SK-N-SH (cell line): ENCODE measurements at regions of chr20 and their contacts with region 1.

Region 1: GRCh38 chr20:54649511-54649962 is 174.1 kb downstream of the DOK5 start:
- DNase-seq: peak; percentile 66
- H3K4me3 ChIP-seq: no peak overlapping the region; a peak in 1 of 4 replicates
- H3K27ac ChIP-seq: no peak overlapping the region; a peak in 1 of 4 replicates
- H3K4me1 ChIP-seq: peaks cover 0 to 3% of the 10 kb centered on the region in 2 experiments; a peak in 1 of 4 replicates
- H3K27me3 ChIP-seq: no peaks in the 10 kb centered on the region
- CTCF ChIP-seq: peak; percentile 85
- EP300 ChIP-seq: no peak
- RAD21 ChIP-seq: peak; percentile 88

Region 2: DNA sequence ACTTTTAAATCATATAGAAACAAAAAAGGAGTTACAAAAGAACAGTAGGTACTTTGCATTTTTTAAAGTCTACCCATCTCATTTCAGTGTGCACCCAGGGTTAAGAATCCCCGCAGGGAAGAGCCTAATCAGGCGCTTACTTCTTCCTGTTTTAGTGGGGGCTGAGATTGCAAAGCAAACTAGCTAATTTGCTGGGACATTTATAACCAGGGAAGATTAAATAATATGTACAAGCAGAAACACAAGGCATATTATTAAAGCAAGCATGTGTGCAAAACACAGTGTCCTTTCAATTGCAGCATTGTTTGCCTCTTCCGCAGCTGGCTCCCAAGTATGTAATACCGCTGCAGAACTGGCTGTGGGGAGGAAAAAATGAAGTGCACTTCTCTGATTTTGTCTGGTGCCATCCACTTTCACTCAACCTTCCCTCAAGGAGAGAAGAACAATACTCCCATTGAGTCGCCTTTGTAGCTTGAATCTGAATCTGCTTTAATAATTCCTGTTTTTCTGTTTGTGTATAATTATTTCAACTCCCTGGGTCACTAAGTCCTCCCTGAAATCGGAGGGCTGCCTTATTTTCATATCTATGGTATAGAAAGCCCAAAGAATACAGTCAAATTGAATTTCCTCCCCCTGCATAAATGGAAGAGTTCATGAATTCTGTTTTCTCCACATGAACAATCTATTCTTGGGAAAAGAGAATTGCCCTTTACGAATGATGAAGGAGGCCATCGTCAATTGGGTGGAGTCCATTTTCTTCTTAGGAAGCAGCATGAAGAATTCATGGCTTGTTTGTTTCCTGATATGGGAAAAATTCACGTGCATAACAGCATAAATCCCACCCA is 555.9 kb before region 1 on chr20:
- CTCF ChIA-PET with region 1: interaction called, 22 read pairs
- POLR2A ChIA-PET with region 1: no interaction called
- DNase-seq: no peak
- H3K4me3 ChIP-seq: no peak overlapping the region
- H3K27ac ChIP-seq: no peak overlapping the region
- H3K4me1 ChIP-seq: peaks cover 0 to 3% of the 10 kb centered on the region in 2 experiments; a peak in 1 of 4 replicates
- H3K27me3 ChIP-seq: no peaks in the 10 kb centered on the region; the same call in 1 of the 2 replicates
- CTCF ChIP-seq: no peak
- EP300 ChIP-seq: no peak
- RAD21 ChIP-seq: no peak

Region 3: DNA sequence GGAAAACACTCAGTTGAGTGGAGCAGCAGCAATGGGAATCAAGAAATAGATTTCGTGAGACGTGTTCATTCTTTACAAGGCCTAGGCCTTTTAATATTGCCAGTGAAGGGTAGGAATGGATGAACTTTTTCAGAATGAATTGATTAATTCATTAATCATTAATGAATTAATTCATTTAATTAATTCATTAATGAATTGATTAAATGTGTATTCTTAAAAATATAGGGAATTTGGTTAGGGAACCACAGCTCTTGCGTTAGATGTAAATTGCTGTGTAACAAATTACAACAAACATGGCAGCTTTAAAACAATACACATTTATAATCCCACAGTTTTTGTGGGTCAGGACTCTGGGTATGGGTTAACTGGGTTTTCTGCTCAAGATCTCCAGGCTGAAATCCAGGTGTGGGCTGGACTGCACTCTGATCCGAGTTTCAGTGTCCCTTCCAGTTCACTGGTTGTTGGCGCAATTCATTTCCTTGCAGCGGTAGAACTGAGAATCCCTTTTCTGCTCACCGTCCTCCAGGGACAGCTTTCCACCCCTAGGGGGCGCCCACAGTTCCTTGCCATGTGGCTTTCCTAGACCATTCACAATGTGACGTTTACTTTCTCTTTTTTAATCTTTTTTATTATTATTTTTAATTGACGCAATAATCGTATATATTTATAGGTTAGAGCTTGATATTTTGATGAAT is 546.3 kb before region 1 on chr20:
- CTCF ChIA-PET with region 1: interaction called, 22 read pairs
- POLR2A ChIA-PET with region 1: no interaction called
- DNase-seq: peak; percentile 56
- H3K4me3 ChIP-seq: no peak overlapping the region
- H3K27ac ChIP-seq: no peak overlapping the region
- H3K4me1 ChIP-seq: no peaks in the 10 kb centered on the region
- H3K27me3 ChIP-seq: no peaks in the 10 kb centered on the region
- CTCF ChIP-seq: peak; percentile 79
- EP300 ChIP-seq: no peak
- RAD21 ChIP-seq: peak; percentile 63

Region 4: DNA sequence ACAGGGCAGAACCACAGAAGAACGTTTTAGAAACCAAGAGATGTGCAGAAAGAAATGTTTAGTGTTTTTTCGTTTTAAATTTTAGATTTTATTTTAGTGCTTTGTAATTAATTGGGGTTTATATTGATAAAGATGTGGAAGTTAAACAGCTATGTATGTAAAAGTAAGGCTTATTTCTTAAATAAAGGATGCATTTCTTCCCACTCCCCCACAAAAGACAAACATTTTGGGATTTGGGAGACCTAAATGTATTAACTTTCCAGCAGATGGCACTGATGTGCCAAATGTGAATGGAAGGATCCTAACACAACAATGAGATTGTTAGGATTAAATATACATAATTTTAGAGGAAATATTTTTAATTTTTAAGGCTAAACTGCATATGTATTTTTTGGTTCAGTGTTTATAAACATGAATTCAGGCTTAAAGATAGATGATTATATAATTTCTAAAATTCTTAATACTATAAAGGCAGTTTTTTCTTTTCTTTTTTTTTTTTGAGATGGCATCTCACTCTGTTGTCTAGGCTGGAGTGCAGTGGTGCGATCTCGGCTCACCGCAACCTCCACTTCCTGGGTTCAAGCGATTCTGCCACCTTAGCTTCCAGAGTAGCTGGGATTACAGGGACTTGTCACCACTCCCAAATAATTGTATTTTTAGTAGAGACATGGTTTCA is 429.6 kb before region 1 on chr20:
- CTCF ChIA-PET with region 1: interaction called, 24 read pairs
- POLR2A ChIA-PET with region 1: no interaction called
- DNase-seq: peak; percentile 53
- H3K4me3 ChIP-seq: no peak overlapping the region; a peak in 1 of 4 replicates
- H3K27ac ChIP-seq: peak overlapping the region in 1 of 2 experiments; percentile 32; a peak in 1 of 4 replicates
- H3K4me1 ChIP-seq: peaks cover 6 to 19% of the 10 kb centered on the region in 2 experiments; a peak in 3 of 4 replicates
- H3K27me3 ChIP-seq: no peaks in the 10 kb centered on the region
- CTCF ChIP-seq: peak; percentile 83
- EP300 ChIP-seq: no peak
- RAD21 ChIP-seq: peak; percentile 75

Region 5: GRCh38 chr20:56171087-56172012 is 1521.8 kb after region 1 on chr20:
- CTCF ChIA-PET with region 1: interaction called, 16 read pairs
- POLR2A ChIA-PET with region 1: no interaction called
- DNase-seq: peak; percentile 61
- H3K4me3 ChIP-seq: no peak overlapping the region
- H3K27ac ChIP-seq: no peak overlapping the region
- H3K4me1 ChIP-seq: peaks cover 0 to 2% of the 10 kb centered on the region in 2 experiments; a peak in 1 of 4 replicates
- H3K27me3 ChIP-seq: no peaks in the 10 kb centered on the region
- CTCF ChIP-seq: no peak
- EP300 ChIP-seq: no peak
- RAD21 ChIP-seq: peak; percentile 88

Region 6: DNA sequence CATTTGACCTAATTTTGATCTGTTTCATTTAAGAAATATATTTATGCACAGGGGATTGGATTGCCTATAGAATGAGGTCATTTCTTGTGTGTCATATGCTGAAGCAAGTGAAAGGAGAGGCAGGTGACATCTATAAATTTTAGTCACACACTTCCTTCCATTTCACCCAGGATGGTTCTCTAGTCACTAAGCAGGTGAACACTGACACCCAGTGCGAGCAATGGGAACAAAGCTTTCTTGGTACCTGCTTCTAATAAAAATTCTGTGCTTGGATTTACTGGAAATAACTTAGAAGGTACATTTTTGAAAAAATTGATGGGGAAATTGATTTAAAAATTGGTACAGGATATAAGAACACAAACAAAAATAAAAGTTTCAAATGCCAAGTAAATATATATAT is 1532.0 kb after region 1 on chr20:
- CTCF ChIA-PET with region 1: interaction called, 15 read pairs
- POLR2A ChIA-PET with region 1: no interaction called
- DNase-seq: peak; percentile 34
- H3K4me3 ChIP-seq: no peak overlapping the region
- H3K27ac ChIP-seq: no peak overlapping the region
- H3K4me1 ChIP-seq: no peaks in the 10 kb centered on the region
- H3K27me3 ChIP-seq: no peaks in the 10 kb centered on the region
- CTCF ChIP-seq: no peak
- EP300 ChIP-seq: no peak
- RAD21 ChIP-seq: peak; percentile 79

Region 7: GRCh38 chr20:56343861-56344381 is 1694.4 kb after region 1 on chr20:
- CTCF ChIA-PET with region 1: interaction called, 11 read pairs
- POLR2A ChIA-PET with region 1: no interaction called
- DNase-seq: peak; percentile 87
- H3K4me3 ChIP-seq: peak overlapping the region; percentile 35 to 50
- H3K27ac ChIP-seq: no peak overlapping the region
- H3K4me1 ChIP-seq: peaks cover 0 to 6% of the 10 kb centered on the region in 2 experiments; a peak in 1 of 4 replicates
- H3K27me3 ChIP-seq: no peaks in the 10 kb centered on the region; the same call in 1 of the 2 replicates
- CTCF ChIP-seq: peak; percentile 71
- EP300 ChIP-seq: no peak
- RAD21 ChIP-seq: peak; percentile 72